Activated B cell treated with CpG ODN at 0.5 μM for 24 hours (primary cell): ENCODE measurements at regions of chr1 and their contacts with region 1.

Region 1: DNA sequence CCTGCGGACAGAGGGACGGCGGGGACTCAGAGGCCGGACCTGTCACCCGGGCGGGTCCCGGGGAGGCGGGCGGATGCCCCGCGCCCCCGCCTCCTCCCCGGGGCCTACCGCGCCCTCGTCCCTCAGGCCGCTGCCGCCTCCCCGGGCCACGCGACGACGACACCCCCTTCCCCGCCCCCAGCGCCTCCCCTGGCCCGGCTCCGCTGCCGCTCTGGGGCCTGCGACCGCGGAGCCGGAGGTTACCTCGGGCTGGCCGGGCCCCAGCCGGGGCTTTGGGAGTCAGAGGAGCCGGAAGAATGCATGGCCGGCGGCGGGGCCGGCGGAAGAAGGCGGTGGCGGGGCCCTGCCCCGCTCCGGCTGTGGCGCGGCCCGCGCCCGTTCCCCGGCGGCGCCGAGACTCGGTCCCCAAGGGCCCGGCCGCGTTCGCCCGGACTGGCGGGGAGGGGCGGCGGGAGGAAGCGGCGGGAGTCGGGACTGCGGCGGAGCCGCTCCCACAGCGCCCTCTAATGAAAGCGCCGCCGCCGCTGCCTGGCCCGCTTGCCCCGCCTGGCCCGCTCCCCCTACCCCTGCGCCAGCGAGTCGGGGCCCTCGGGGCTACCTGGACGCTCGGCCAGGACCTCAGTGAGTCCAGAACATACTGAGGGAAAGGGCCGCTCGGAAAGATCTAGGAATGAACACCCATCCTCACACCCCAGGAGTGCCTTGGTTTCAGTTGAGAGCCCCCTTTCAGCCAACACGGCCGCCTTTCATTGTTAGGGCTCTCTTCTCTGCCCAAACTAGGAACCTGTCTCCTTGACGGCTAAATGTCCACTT is at the start of gene LPGAT1:
- DNase-seq: peak; percentile 78
- ATAC-seq: peak; percentile 86
- H3K4me3 Mint-ChIP-seq: peak within 1 kb of the TSS; percentile 95
- H3K27ac Mint-ChIP-seq: peak within 1 kb of the TSS; percentile 89
- H3K4me1 Mint-ChIP-seq: peaks cover 55% of the 10 kb centered on the region
- H3K27me3 Mint-ChIP-seq: no peaks in the 10 kb centered on the region
- CTCF ChIP-seq: no peak
- total RNA-seq, gene LPGAT1: 39.2 and 43.6 TPM in 2 replicates

Region 2: DNA sequence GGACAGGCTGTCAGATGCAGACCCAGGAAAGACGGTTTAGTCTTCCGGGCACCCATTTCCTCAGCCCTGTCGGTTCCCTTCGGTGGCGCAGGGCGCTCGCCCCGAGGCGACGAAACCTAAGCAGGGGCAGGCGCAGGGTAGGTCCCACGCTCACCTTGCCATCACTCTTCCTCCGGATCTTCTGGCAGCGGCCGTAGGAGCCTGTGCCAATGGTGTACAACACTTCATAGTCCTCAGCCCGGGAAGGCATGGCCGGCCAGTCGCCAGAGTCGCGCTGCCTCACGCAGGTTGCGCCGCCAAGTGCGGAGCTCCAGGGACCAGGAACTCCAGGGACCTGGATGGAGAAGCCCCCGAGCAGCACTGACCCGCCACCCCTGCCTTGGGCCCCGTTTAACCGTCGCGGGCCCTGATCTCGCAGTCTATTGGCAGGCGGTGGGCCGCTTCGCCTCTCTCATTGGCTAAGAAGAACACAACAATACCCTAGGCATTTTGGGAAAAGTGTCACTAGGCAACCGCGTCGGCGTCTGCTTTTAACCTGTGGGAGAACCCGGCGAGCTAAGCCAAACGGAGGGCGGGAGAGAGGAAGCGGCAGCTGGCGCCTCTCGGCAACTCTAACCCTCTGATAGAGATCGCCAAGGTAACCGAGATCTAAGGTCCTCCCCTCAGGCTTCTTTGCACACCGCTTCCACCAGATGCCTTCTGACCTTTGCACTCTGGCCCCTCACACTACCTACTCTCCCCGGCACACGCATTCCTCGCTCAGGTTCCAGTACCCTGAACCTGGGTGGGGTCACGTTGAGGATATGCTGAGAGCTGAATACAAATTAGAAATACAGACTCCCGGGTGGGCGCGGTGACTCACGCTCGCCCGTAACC is 155.1 kb before region 1 on chr1 and contains the start of gene NEK2:
- CTCF ChIA-PET with region 1: interaction called, 10 read pairs
- POLR2A ChIA-PET with region 1: no interaction called
- intact Hi-C with region 1: loop called (anchors 1 kb)
- DNase-seq: peak; percentile 64
- ATAC-seq: peak; percentile 93
- H3K4me3 Mint-ChIP-seq: peak within 1 kb of the TSS; percentile 88
- H3K27ac Mint-ChIP-seq: peak within 1 kb of the TSS; percentile 69
- H3K4me1 Mint-ChIP-seq: peaks cover 39% of the 10 kb centered on the region
- H3K27me3 Mint-ChIP-seq: no peaks in the 10 kb centered on the region
- CTCF ChIP-seq: no peak
- total RNA-seq, gene NEK2: 0.35 and 0.59 TPM in 2 replicates

Region 3: GRCh38 chr1:211698161-211699026 is 132.1 kb before region 1 on chr1:
- CTCF ChIA-PET with region 1: no interaction called
- POLR2A ChIA-PET with region 1: interaction called, 5 read pairs
- intact Hi-C with region 1: loop called (anchors 5 kb)
- DNase-seq: peak; percentile 59
- ATAC-seq: peak; percentile 40
- H3K4me3 Mint-ChIP-seq: peak overlapping the region; percentile 68
- H3K27ac Mint-ChIP-seq: no peak overlapping the region
- H3K4me1 Mint-ChIP-seq: peaks cover 57% of the 10 kb centered on the region
- H3K27me3 Mint-ChIP-seq: peaks cover 3% of the 10 kb centered on the region
- CTCF ChIP-seq: peak; percentile 22

Region 4: DNA sequence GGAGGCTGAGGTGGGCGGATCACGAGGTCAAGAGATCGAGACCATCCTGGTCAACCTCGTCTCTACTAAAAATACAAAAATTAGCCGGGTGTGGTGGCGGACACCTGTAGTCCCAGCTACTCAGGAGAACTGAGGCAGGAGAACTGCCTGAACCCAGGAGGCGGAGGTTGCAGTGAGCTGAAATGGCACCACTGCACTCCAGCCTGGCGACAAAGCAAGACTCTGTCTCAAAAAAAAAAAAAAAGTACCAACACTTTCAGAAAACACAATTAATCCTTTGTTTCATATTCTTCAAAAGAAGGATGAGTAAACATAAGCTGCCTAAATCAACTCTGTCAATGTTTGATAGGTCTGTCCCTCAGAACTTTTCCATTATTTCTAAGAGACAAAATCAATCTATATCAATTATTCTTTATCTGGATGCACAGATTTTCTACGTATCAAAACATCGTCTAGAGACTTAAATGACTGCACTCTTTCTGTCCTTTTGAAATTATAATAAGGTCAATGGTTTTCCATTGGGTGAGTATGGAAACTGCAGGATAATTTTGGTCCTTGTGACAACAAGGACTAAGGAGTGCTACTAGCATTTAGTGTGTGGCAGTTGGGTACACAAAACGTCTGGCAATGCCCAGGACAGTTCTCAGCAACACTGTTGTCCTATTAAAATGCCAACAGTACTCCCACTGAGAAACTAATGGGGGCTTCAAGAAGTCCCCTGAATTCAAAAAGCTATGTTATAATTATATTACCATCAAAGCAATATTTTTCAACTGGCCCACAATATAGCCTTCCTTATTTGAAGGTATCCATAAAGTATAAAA is 40.7 kb before region 1 on chr1:
- CTCF ChIA-PET with region 1: no interaction called
- POLR2A ChIA-PET with region 1: no interaction called
- intact Hi-C with region 1: loop called (anchors 5 kb)
- DNase-seq: no peak
- ATAC-seq: no peak
- H3K4me3 Mint-ChIP-seq: no peak overlapping the region
- H3K27ac Mint-ChIP-seq: no peak overlapping the region
- H3K4me1 Mint-ChIP-seq: no peaks in the 10 kb centered on the region
- H3K27me3 Mint-ChIP-seq: no peaks in the 10 kb centered on the region
- CTCF ChIP-seq: no peak

Region 5: DNA sequence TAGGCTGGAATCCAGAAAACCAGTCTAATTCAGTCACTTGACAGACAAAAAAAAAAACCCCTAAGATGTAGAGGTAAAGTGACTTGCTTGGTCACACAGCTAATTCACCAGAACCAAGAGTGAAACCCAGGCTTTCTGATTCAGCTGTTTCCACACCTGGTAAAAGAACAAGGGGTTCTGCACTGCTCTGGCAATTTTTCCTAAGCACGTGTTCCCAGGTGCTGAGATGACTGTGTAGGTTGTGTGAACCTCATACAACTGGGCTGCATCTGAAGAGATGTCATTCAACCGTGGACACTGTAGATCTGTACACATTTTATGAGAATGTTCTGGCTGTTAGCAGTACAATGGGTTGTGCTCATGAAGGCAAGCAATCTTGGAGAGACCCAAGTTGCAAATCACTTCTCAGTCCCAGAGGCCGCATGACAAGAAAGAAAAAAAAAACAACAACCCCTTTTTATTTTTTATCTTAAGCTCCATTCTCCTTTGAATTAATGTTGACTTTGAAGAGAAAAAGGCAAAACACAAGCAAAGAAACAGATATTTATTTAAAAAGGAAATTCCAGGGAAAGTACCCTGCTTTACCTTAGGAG is 109.4 kb after region 1 on chr1:
- CTCF ChIA-PET with region 1: no interaction called
- POLR2A ChIA-PET with region 1: no interaction called
- intact Hi-C with region 1: loop called (anchors 2 kb)
- DNase-seq: no peak
- ATAC-seq: peak; percentile 55
- H3K4me3 Mint-ChIP-seq: peak overlapping the region; percentile 11
- H3K27ac Mint-ChIP-seq: peak overlapping the region; percentile 56
- H3K4me1 Mint-ChIP-seq: peaks cover 43% of the 10 kb centered on the region
- H3K27me3 Mint-ChIP-seq: no peaks in the 10 kb centered on the region
- CTCF ChIP-seq: no peak

Region 6: DNA sequence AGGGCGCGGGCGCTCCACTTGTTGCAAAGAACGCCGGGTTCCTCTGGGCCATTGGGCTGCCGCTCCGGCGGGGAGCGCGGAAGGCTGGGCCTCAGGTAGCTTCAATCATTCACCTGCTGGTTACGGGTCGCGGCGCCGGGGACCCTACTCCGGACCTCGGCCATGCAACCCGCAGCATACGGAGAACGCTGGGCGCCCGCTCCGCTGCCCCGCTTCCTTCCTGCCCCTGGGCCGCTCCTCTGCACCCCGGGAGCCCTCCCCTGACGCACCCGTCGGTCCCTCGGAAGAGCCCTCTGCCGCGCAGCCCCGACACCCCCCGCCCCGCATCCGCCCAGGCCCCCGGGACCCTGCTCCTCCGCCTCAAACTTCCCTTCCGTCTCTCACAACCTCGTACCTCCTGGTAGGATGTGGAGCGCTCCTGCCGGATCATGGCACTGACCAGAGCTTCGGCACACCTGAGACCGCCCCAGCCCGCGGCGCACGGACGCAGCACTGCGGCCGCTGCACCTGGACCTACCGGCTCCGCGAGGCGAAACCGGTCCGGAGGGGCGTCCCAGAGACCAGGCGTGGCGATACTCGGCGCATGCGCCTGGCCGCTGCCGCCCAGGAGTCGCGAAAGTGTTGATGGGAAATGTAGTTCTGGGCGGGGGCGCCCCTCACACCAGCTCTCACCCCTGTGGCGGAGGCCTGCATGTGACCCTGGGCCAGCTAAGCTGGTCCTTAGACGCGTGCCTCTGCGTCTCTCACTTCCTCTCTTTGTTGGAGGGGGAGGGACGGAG is 584.0 kb after region 1 on chr1 and contains the start of gene PACC1:
- CTCF ChIA-PET with region 1: no interaction called
- POLR2A ChIA-PET with region 1: no interaction called
- intact Hi-C with region 1: loop called (anchors 1 kb)
- DNase-seq: peak; percentile 93
- ATAC-seq: peak; percentile 98
- H3K4me3 Mint-ChIP-seq: peak within 1 kb of the TSS; percentile 100
- H3K27ac Mint-ChIP-seq: peak within 1 kb of the TSS; percentile 96
- H3K4me1 Mint-ChIP-seq: peaks cover 43% of the 10 kb centered on the region
- H3K27me3 Mint-ChIP-seq: no peaks in the 10 kb centered on the region
- CTCF ChIP-seq: no peak
- total RNA-seq, gene PACC1: 15.2 and 20.0 TPM in 2 replicates